ENCODE measurements at regions of chr7 and their contacts with region 1.

Region 1: GRCh38 chr7:74561898-74562613 is 95.5 kb upstream of the GTF2I start:
- DNase-seq: peak; percentile 24
- H3K4me3 ChIP-seq: no peak overlapping the region
- H3K27ac ChIP-seq: no peak overlapping the region
- H3K4me1 ChIP-seq: no peaks in the 10 kb centered on the region
- H3K27me3 ChIP-seq: no peaks in the 10 kb centered on the region
- CTCF ChIP-seq: no peak

Region 2: GRCh38 chr7:74429153-74429747 is 132.8 kb before region 1 on chr7:
- CTCF ChIA-PET with region 1: no interaction called
- dilution Hi-C with region 1: no loop called
- in situ Hi-C with region 1: loop called (anchors 5 to 25 kb)
- intact Hi-C with region 1: no loop called
- DNase-seq: no peak
- H3K4me3 ChIP-seq: no peak overlapping the region
- H3K27ac ChIP-seq: no peak overlapping the region
- H3K4me1 ChIP-seq: no peaks in the 10 kb centered on the region
- H3K27me3 ChIP-seq: no peaks in the 10 kb centered on the region
- CTCF ChIP-seq: no peak

Measured in mammary epithelial cell (primary cell).